Sciatic nerve (tissue), 2 donors: ENCODE measurements at regions of chr7 and their contacts with region 1.

Region 1: DNA sequence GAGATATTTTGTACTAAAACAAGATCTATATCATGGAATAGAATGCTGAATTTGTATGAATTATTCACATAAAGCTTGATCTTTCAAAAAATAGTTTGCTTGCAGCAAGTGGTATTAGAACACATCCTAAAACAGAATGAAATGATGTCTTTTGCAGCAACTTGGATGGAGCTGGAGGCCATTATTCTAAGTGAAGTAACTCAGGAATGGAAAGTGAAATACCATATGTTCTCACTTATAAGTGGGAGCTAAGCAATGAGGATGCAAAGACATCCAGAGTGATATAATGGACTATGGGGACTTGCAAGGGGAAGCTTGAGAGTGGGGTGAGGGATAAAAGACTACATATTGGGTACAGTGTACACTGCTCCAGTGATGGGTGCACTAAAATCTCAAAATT is 53.7 kb downstream of the ASB4 start:
- DNase-seq: no peak
- ATAC-seq: no peak

Region 2: DNA sequence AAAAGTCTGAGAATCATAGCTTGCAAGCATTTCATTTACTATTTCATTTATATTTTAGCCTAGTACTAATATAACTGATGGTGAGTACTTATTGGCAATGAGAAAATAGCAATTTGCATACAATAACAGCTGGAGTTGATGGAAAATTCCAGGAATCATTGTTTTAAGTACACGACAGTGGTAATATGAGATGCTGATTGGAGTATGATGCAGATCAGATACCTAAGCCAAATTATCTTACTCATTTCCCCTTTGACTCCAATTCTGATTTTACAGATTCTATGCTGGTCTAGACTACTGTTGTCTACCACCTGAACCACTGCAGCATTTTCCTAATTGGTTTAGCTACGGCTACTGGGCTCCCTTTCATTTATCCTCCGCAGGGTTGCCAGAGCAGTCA is 1581.2 kb before region 1 on chr7:
- intact Hi-C with region 1: no loop called
- DNase-seq: no peak
- ATAC-seq: no peak

Region 3: DNA sequence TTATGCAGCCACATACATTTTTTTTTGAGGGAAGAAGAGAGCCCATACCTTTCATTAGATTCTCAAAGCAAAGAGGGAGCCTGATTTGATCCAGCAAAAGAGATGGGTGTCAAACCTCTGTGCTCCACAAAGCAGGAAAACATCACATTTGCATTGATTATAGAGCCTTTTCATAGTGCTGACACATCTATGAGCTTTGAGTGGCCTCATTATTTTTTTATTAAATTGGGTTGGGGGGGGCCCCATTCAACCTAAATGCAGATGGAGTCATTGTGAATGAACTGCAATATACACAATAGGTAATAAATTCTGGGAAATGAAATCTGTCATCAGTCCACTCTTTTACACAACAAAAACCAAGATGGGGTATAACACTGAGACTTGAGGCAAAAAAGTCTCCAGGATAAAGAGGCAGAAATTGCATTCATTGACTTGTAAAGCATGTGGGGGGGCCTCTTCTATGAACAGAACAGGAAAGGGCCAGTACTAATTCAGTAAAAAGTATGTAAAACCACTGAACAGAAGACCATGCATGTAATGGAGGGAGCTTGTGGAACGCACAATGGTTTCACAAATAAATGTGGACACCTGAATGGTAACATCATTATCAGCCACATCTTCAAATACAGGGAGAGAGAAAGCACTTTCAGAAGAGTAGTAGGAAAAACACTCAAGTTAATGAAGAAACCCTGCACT is 71.4 kb before region 1 on chr7:
- intact Hi-C with region 1: loop called (anchors 2 kb)
- DNase-seq: no peak
- ATAC-seq: no peak